CD8-positive, alpha-beta memory T cell (primary cell): ENCODE measurements at regions of chr13 and their contacts with region 1.

Region 1: DNA sequence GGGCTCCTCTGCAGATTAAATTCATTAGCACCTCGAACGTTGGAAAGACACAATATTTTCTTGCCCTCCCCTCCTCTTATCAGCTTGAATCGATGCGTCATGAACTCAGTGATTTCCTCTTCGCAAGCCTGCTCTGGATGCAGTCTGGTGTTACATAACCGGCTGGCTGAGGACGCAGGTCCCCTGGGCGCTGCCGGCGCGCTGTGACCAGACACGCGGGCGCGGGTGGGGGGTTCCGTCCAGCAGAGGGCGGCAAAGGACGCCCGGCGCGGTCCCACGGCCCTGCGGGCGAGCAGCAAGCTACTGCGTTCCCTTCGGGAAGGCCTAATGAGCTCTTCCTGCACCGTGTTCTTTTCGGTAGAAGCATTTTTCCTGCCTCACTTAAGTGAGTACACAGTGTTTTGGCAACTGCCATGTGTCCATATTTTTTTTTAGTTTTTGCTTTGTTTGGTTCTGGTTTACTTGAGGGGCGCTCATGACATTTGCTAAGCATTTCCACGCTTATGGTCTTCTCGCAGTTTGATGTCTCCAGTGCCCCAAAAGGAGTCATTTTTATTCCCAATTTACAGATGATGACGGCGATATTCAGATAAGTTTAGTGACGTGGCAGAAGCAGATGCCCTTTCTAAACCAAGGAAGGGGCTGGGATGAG is 112.2 kb upstream of the MBNL2 start:
- DNase-seq: peak; percentile 69 to 79 (median 71)
- H3K4me3 ChIP-seq: no peak overlapping the region
- H3K4me3 Mint-ChIP-seq: peak overlapping the region in 4 of 7 donors; percentile 39 to 62 (median 44)
- H3K27ac ChIP-seq: no peak overlapping the region
- H3K27ac Mint-ChIP-seq: peak overlapping the region in 5 of 8 donors; percentile 58 to 93 (median 78)
- H3K4me1 ChIP-seq: no peaks in the 10 kb centered on the region
- H3K4me1 Mint-ChIP-seq: peaks cover 12 to 17% (median 14%) of the 10 kb centered on the region in 3 donors
- H3K27me3 ChIP-seq: no peaks in the 10 kb centered on the region
- H3K27me3 Mint-ChIP-seq: peaks cover 5 to 8% of the 10 kb centered on the region in 2 donors

Region 2: GRCh38 chr13:97079726-97080125 is 30.2 kb before region 1 on chr13:
- CTCF ChIA-PET with region 1: no interaction called
- POLR2A ChIA-PET with region 1: no interaction called
- DNase-seq: no peak
- H3K4me3 ChIP-seq: no peak overlapping the region
- H3K4me3 Mint-ChIP-seq: no peak overlapping the region
- H3K27ac ChIP-seq: no peak overlapping the region
- H3K27ac Mint-ChIP-seq: no peak overlapping the region
- H3K4me1 ChIP-seq: no peaks in the 10 kb centered on the region
- H3K4me1 Mint-ChIP-seq: no peaks in the 10 kb centered on the region
- H3K27me3 ChIP-seq: no peaks in the 10 kb centered on the region
- H3K27me3 Mint-ChIP-seq: peaks cover 3 to 21% of the 10 kb centered on the region in 2 donors

Region 3: GRCh38 chr13:97120346-97120745 is 10.4 kb after region 1 on chr13:
- CTCF ChIA-PET with region 1: interaction called, 10 read pairs
- POLR2A ChIA-PET with region 1: no interaction called
- DNase-seq: no peak
- H3K4me3 ChIP-seq: no peak overlapping the region
- H3K4me3 Mint-ChIP-seq: no peak overlapping the region
- H3K27ac ChIP-seq: no peak overlapping the region
- H3K27ac Mint-ChIP-seq: no peak overlapping the region
- H3K4me1 ChIP-seq: no peaks in the 10 kb centered on the region
- H3K4me1 Mint-ChIP-seq: peaks cover 0 to under 1% (median under 1%) of the 10 kb centered on the region in 3 donors
- H3K27me3 ChIP-seq: peaks cover 4% of the 10 kb centered on the region
- H3K27me3 Mint-ChIP-seq: peaks cover 18 to 40% of the 10 kb centered on the region in 2 donors

Region 4: DNA sequence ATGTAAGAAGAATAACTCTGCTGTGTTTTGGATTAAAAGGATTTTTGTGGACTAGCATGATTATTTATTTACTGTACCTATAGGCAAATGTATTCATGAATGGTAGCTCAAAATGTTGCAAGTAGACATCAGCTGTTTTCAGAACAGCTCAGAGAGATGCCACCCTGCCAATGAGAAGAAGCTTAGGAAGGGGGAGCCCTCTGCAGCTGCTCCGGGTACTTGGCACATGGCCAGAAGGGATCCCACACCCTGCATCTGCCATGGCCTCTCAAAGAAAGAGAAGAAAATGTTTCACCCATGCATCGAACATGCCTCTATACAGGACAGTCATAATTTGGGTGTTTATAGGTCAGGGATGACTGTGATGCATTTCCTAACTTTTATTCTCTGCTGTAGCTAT is 81.6 kb after region 1 on chr13:
- CTCF ChIA-PET with region 1: interaction called, 10 read pairs
- POLR2A ChIA-PET with region 1: no interaction called
- DNase-seq: no peak
- H3K4me3 ChIP-seq: no peak overlapping the region
- H3K4me3 Mint-ChIP-seq: no peak overlapping the region
- H3K27ac ChIP-seq: no peak overlapping the region
- H3K27ac Mint-ChIP-seq: no peak overlapping the region
- H3K4me1 ChIP-seq: no peaks in the 10 kb centered on the region
- H3K4me1 Mint-ChIP-seq: peaks cover 3 to 12% (median 4%) of the 10 kb centered on the region in 3 donors
- H3K27me3 ChIP-seq: no peaks in the 10 kb centered on the region
- H3K27me3 Mint-ChIP-seq: peaks cover 0 to 8% of the 10 kb centered on the region in 2 donors

Region 5: DNA sequence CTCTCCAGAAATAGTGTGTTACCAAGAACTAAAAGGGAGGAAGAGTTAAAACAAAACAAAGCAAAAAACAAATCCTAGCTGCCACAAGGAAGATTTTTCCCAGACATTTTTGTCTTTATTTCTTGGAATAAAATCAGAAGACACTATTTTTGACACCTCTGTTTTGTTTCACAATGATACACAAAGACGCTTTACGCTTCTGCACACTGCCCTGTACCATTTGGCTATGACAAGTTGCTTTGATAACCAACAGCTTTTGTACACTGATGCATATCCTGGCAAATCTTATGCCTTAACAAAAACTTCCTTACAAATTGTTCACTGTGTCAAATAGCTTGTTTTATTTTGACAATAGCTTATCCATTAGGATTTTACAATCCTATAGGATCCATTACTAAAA is 220.5 kb after region 1 on chr13:
- CTCF ChIA-PET with region 1: interaction called, 11 read pairs
- POLR2A ChIA-PET with region 1: no interaction called
- DNase-seq: no peak
- H3K4me3 ChIP-seq: no peak overlapping the region
- H3K4me3 Mint-ChIP-seq: no peak overlapping the region
- H3K27ac ChIP-seq: no peak overlapping the region
- H3K27ac Mint-ChIP-seq: no peak overlapping the region
- H3K4me1 ChIP-seq: no peaks in the 10 kb centered on the region
- H3K4me1 Mint-ChIP-seq: peaks cover 19 to 42% (median 34%) of the 10 kb centered on the region in 3 donors
- H3K27me3 ChIP-seq: no peaks in the 10 kb centered on the region
- H3K27me3 Mint-ChIP-seq: no peaks in the 10 kb centered on the region

Region 6: DNA sequence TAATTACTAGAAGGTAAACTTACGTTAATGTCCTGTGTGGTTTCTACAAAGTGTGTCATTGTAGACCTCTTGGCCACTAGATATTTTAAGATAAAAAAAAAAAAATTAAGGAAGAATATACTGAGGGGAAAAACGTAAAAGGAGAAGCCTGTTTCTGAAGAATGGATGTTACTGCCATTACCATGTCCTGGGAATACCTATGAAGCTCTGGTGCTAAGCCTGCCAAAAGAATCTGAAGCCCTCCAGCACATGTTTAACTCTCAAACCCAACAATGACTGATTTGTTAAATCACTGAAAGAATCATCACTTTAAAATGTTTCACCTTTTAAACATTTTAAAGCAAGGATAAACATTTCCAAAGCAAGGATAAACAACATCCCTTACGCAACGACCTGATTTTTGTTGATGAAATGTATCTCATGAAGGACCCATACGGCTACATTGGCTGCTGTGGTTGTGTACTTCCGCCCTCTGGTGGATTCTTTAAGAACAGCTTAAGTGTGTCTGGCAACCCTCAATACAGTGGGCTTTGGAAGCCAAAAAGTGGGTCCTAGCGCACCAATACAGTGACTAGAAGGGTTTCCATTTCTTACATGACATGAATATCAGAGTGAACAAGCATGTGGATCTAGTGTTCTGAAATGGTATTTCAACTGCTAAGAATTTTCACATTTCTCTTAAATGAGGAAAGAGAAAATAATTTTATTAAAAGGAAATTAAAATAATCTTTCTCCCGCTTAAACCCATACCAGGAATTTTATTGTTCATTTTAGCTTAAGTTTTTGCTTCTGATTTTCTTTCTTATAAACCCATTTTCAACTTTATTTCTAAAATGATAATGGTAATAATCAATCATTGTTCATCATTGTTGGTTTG is 249.5 kb after region 1 on chr13:
- CTCF ChIA-PET with region 1: interaction called, 181 read pairs
- POLR2A ChIA-PET with region 1: interaction called, 3 read pairs
- DNase-seq: peak; percentile 18 to 62 (median 40)
- H3K4me3 ChIP-seq: no peak overlapping the region
- H3K4me3 Mint-ChIP-seq: no peak overlapping the region
- H3K27ac ChIP-seq: no peak overlapping the region
- H3K27ac Mint-ChIP-seq: peak overlapping the region in 3 of 8 donors; percentile 1 to 60 (median 20)
- H3K4me1 ChIP-seq: no peaks in the 10 kb centered on the region
- H3K4me1 Mint-ChIP-seq: peaks cover 0 to 7% (median 4%) of the 10 kb centered on the region in 3 donors
- H3K27me3 ChIP-seq: no peaks in the 10 kb centered on the region
- H3K27me3 Mint-ChIP-seq: no peaks in the 10 kb centered on the region

Region 7: GRCh38 chr13:97386801-97387484 is 277.0 kb after region 1 on chr13:
- CTCF ChIA-PET with region 1: interaction called, 11 read pairs
- POLR2A ChIA-PET with region 1: no interaction called
- DNase-seq: peak in 3 of 5 donors; percentile 15 to 51 (median 22)
- H3K4me3 ChIP-seq: no peak overlapping the region
- H3K4me3 Mint-ChIP-seq: peak overlapping the region in 2 of 7 donors; percentile 42 to 58
- H3K27ac ChIP-seq: no peak overlapping the region
- H3K27ac Mint-ChIP-seq: peak overlapping the region in 4 of 8 donors; percentile 66 to 82 (median 74)
- H3K4me1 ChIP-seq: peaks cover 7% of the 10 kb centered on the region
- H3K4me1 Mint-ChIP-seq: peaks cover 23 to 37% (median 35%) of the 10 kb centered on the region in 3 donors
- H3K27me3 ChIP-seq: no peaks in the 10 kb centered on the region
- H3K27me3 Mint-ChIP-seq: no peaks in the 10 kb centered on the region